GM23248 (cell line): ENCODE measurements at regions of chr12 and their contacts with region 1.

Region 1: GRCh38 chr12:39103552-39104165 is 198.3 kb upstream of the CPNE8 start:
- DNase-seq: peak; percentile 81
- H3K4me3 ChIP-seq: no peak overlapping the region
- H3K27ac ChIP-seq: no peak overlapping the region
- H3K4me1 ChIP-seq: peaks cover 13% of the 10 kb centered on the region
- H3K27me3 ChIP-seq: no peaks in the 10 kb centered on the region

Region 2: GRCh38 chr12:38138225-38139221 is 965.1 kb before region 1 on chr12:
- in situ Hi-C with region 1: loop called (anchors 25 kb)
- DNase-seq: peak; percentile 57
- H3K4me3 ChIP-seq: peak overlapping the region; percentile 71
- H3K27ac ChIP-seq: no peak overlapping the region
- H3K4me1 ChIP-seq: no peaks in the 10 kb centered on the region
- H3K27me3 ChIP-seq: peaks cover 4% of the 10 kb centered on the region; the same call in 1 of the 2 replicates

Region 3: DNA sequence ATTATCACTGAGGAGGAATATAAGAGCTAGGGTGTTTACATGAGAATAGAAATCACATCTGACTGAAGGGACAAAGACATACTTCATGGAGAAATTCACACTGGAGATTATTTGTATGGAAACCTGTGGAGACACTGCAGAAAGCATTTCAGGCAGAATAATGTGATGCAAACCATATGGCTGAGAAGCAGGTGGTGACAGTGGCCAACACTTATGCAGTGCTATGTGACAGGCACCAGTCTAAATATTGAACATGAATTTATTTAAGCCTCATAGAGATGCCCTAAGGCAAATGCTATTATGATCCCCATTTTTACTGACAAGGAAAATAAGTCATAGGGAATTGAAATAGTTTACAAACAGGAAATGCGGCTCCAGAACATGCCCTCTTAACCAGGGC is 770.8 kb before region 1 on chr12:
- in situ Hi-C with region 1: loop called (anchors 10 kb)
- DNase-seq: no peak
- H3K4me3 ChIP-seq: no peak overlapping the region
- H3K27ac ChIP-seq: no peak overlapping the region
- H3K4me1 ChIP-seq: no peaks in the 10 kb centered on the region
- H3K27me3 ChIP-seq: no peaks in the 10 kb centered on the region

Region 4: GRCh38 chr12:39178837-39179236 is 75.2 kb after region 1 on chr12:
- in situ Hi-C with region 1: no loop called
- DNase-seq: no peak
- H3K4me3 ChIP-seq: no peak overlapping the region
- H3K27ac ChIP-seq: no peak overlapping the region
- H3K4me1 ChIP-seq: no peaks in the 10 kb centered on the region
- H3K27me3 ChIP-seq: no peaks in the 10 kb centered on the region